Posterior cingulate gyrus (tissue), 11 donors: ENCODE measurements at regions of chr3 and their contacts with region 1.

Region 1: DNA sequence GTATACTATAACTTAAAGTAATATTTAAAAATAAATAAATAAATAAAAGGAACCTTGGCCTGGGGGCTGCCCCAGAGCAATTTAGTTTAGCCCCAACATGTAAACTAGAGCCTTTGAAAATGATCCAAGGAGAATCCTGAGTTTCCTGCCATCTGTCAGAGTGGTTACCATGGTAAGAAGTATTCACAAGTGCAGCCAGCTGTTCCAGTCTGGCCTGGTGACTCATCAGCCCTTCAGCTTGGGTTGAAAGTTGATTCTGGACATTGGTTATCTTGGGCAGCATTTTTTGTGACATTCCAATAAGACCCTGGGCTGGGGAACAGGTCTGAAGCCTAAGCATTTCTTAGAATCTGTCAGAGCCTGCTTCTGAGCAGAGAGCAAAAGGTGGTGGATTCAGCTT is 72.7 kb upstream of the LRTM1 start:
- DNase-seq: no peak

Region 2: GRCh38 chr3:54870423-54870822 is 130.1 kb before region 1 on chr3:
- intact Hi-C with region 1: loop called (anchors 10 kb)
- DNase-seq: peak in 2 of 10 donors; percentile 21 to 49